ENCODE measurements at regions of chr10 and their contacts with region 1.

Region 1: GRCh38 chr10:81192221-81192788 is 654.6 kb downstream of the SH2D4B start:
- DNase-seq: no peak
- H3K4me3 ChIP-seq: no peak overlapping the region
- H3K27ac ChIP-seq: no peak overlapping the region
- H3K4me1 ChIP-seq: no peaks in the 10 kb centered on the region
- H3K27me3 ChIP-seq: no peaks in the 10 kb centered on the region
- CTCF ChIP-seq: no peak
- EP300 ChIP-seq: no peak
- POLR2A ChIP-seq: no peak

Region 2: DNA sequence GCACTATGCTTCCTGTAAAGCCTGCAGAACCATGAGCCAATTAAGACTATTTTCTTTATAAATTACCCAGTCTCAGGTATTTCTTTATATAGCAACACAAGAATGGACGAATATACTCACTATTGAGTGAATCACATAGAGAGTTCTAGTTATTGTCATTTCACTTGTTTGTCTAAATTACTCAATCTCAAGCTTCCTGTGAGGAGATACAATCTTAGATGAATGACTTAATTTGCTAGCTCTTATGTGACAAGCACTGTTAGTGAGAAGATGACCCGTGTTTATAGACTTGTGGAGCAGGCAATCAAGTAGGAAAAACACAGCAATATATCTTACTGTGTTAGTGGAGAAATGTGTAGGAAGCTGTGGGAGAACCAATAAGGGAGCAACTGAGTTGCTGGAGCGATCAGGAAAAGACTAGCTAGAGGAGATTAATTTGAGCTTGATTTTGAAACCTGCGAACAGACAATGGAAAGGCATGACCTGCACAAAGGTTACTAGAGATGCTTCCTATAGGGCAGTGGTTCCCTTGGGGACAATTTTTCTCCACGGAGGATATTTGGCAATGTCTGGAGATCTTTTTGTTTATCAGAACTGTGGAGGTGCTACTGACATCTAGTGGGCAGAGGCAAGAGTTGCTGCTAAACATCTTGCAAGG is 173.5 kb before region 1 on chr10:
- intact Hi-C with region 1: no loop called
- DNase-seq: no peak
- H3K4me3 ChIP-seq: no peak overlapping the region
- H3K27ac ChIP-seq: no peak overlapping the region
- H3K4me1 ChIP-seq: no peaks in the 10 kb centered on the region
- H3K27me3 ChIP-seq: no peaks in the 10 kb centered on the region
- CTCF ChIP-seq: no peak
- EP300 ChIP-seq: no peak
- POLR2A ChIP-seq: no peak

Region 3: GRCh38 chr10:81472927-81473470 is 280.7 kb after region 1 on chr10:
- intact Hi-C with region 1: loop called in 1 of 4 experiments (anchors 10 kb)
- DNase-seq: no peak
- H3K4me3 ChIP-seq: no peak overlapping the region
- H3K27ac ChIP-seq: no peak overlapping the region
- H3K4me1 ChIP-seq: no peaks in the 10 kb centered on the region
- H3K27me3 ChIP-seq: no peaks in the 10 kb centered on the region
- CTCF ChIP-seq: no peak
- EP300 ChIP-seq: no peak
- POLR2A ChIP-seq: no peak

Measured in ovary (tissue), 10 donors.